Sigmoid colon (tissue), 7 donors: ENCODE measurements at regions of chr9 and their contacts with region 1.

Region 1: GRCh38 chr9:137605121-137606004 is at the start of gene ARRDC1:
- DNase-seq: peak; percentile 97
- H3K4me3 ChIP-seq: peak within 1 kb of the TSS; percentile 54 to 99 (median 84)
- H3K27ac ChIP-seq: peak within 1 kb of the TSS; percentile 79 to 85 (median 84)
- H3K4me1 ChIP-seq: peaks cover 0 to 32% (median 25%) of the 10 kb centered on the region in 4 donors
- H3K27me3 ChIP-seq: no peaks in the 10 kb centered on the region
- CTCF ChIP-seq: no peak
- EP300 ChIP-seq: no peak
- POLR2A ChIP-seq: no peak
- total RNA-seq, gene ARRDC1: 12.5 to 26.3 (median 19.7) TPM

Region 2: DNA sequence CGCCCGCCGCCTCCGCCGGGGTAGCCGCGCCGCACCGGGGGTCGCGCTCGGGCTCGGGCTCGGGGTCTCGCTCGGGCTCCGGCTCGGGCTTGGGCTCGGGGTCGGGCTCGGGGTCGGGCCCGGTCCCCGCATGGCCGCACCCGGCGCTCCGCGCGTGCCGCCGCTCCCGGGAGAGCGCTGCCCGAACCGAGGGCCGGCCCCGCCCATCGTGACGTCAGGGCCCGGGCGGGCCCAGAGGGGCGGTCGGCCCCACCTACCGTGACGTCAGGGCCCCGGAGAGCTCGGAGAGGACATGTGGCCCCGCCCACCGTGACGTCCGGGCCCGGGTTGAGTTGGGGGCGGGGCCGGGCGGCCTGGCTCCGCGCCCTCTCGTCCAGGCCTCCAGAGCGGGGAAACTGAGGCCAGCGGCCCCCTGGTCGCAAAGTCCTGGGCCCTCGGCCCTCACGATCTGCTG is 146.2 kb before region 1 on chr9 and contains the start of gene NSMF:
- intact Hi-C with region 1: loop called (anchors 10 kb)
- DNase-seq: peak; percentile 98
- H3K4me3 ChIP-seq: peak within 1 kb of the TSS; percentile 48 to 79 (median 68)
- H3K27ac ChIP-seq: peak within 1 kb of the TSS; percentile 59 to 80 (median 74)
- H3K4me1 ChIP-seq: peaks cover 0 to 45% (median 35%) of the 10 kb centered on the region in 4 donors
- H3K27me3 ChIP-seq: no peaks in the 10 kb centered on the region
- CTCF ChIP-seq: no peak
- EP300 ChIP-seq: no peak
- POLR2A ChIP-seq: no peak
- total RNA-seq, gene NSMF: 21.8 to 33.8 (median 27.4) TPM

Region 3: DNA sequence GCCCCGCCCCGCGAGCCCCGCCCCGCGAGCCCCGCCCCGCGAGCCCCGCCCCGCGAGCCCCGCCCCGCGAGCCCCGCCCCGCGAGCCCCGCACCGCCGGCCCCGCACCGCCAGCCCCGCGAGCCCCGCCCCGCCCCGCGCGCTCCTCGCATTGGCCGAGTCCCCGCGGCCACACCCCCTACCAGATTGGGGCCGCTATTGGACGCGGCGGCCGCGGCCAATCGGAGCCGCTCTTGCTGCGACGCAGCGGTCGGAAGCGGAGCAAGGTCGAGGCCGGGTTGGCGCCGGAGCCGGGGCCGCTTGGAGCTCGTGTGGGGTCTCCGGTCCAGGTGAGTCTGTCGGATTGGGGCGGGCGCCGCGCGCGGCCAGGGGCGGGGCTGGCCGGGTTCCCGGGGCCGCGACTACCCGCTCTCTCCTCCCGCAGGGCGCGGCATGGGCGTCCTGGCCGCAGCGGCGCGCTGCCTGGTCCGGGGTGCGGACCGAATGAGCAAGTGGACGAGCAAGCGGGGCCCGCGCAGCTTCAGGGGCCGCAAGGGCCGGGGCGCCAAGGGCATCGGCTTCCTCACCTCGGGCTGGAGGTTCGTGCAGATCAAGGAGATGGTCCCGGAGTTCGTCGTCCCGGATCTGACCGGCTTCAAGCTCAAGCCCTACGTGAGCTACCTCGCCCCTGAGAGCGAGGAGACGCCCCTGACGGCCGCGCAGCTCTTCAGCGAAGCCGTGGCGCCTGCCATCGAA is 53.5 kb before region 1 on chr9 and contains the start of gene MRPL41:
- intact Hi-C with region 1: loop called (anchors 5 kb)
- DNase-seq: peak; percentile 95
- H3K4me3 ChIP-seq: peak within 1 kb of the TSS; percentile 56 to 95 (median 86)
- H3K27ac ChIP-seq: peak within 1 kb of the TSS; percentile 86 to 94 (median 92)
- H3K4me1 ChIP-seq: peaks cover 0 to 42% (median 33%) of the 10 kb centered on the region in 4 donors
- H3K27me3 ChIP-seq: no peaks in the 10 kb centered on the region
- CTCF ChIP-seq: no peak
- EP300 ChIP-seq: no peak
- POLR2A ChIP-seq: peak; percentile 65 to 70
- total RNA-seq, gene MRPL41: 38.5 to 73.1 (median 57.9) TPM

Region 4: DNA sequence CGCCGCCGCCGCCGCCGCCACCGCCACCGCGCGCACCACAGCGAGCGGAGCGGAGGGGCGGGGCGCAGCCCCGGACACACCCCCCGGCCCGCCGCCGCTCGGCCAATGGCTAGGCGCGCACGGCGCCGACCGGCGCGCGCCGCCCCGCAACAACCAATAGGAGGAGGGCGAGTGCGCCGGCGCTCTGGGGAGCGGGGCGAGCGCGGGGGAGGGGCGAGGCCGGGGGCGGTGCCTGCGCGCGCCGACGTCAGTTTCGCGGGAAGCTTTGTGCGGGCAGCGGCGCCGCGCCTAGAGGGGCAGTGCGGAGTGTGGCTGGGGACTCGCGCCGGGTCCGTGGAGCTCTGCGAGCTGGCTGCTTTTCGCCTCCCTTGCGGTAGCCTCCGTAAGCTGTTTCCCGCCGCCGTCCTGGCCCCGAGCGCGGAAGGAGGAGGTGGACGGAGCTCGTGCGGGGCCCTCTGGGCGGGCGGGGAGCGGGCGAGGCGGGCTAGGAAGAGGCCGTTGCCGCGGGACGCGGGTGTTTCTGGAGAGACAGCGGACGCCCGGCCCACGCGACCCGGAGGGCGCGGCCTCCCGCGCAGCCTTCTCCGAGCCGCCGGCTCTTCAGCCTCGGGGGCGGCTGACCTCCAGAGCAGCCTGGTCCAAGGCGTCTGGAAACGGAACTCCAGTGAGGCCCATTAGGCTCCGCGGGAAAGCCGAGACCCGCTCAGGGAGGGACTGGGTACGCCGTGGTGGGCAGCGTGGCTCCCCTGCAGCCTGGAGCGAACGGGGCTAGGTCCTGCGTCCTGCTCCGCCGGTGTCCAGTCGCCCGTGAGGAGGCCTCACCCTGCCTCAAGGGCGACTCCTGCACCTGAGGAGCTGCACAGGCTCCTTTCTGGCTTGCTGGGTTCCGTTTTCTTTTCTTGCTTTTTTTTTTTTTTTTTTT is 14.6 kb before region 1 on chr9 and contains the start of gene ZMYND19:
- intact Hi-C with region 1: loop called (anchors 1 kb)
- DNase-seq: peak; percentile 94
- H3K4me3 ChIP-seq: peak within 1 kb of the TSS; percentile 64 to 84 (median 76)
- H3K27ac ChIP-seq: peak within 1 kb of the TSS; percentile 53 to 80 (median 77)
- H3K4me1 ChIP-seq: peaks cover 0 to 27% (median 22%) of the 10 kb centered on the region in 4 donors
- H3K27me3 ChIP-seq: no peaks in the 10 kb centered on the region
- CTCF ChIP-seq: no peak
- EP300 ChIP-seq: no peak
- POLR2A ChIP-seq: no peak
- total RNA-seq, gene ZMYND19: 7.2 to 13.0 (median 10.0) TPM

Region 5: GRCh38 chr9:137618105-137619067 is 13.0 kb after region 1 on chr9 and contains the start of gene EHMT1:
- intact Hi-C with region 1: loop called (anchors 2 kb)
- DNase-seq: peak; percentile 90
- H3K4me3 ChIP-seq: peak within 1 kb of the TSS; percentile 83 to 94 (median 86)
- H3K27ac ChIP-seq: peak within 1 kb of the TSS; percentile 91 to 95 (median 92)
- H3K4me1 ChIP-seq: peaks cover 0 to 48% (median 44%) of the 10 kb centered on the region in 4 donors
- H3K27me3 ChIP-seq: no peaks in the 10 kb centered on the region
- CTCF ChIP-seq: no peak
- EP300 ChIP-seq: no peak
- POLR2A ChIP-seq: peak in 1 of 2 donors; percentile 50
- total RNA-seq, gene EHMT1: 60.4 to 91.4 (median 70.7) TPM

Region 6: DNA sequence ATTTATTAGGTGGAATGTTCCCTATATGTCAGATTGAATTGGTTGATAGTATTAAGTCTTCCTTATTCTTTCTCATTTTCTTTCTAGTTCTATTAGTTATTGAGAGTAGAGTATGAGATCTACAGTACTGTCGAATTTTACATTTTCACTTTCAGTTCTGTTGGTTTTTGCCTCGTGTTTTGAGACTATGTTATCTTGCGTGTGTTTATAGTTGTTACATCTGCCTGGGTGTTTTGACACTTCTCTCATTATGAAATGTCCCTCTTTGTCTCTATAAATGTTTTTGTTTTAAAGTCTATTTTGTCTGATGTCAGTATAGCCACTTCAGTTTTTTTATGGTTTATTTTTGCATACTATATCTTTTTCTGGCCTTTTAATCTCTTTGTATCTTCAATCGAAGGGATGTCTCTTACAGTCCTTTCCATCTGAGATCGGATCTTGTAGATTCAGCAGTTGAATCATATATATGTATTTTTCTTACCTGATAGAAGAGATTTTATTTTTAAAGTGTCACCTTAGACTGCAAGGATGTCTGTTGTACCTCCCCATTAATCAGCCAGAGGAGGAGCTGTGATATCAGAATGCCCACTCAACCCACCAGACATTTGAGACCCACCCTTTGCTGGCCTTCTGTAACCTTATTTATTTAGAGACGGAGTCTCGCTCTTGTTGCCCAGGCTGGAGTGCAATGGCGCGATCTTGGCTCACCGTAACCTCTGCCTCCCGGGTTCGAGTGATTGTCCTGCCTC is 34.1 kb after region 1 on chr9:
- intact Hi-C with region 1: no loop called
- DNase-seq: no peak
- H3K4me3 ChIP-seq: peak overlapping the region in 1 of 4 donors; percentile 1
- H3K27ac ChIP-seq: peak overlapping the region in 1 of 4 donors; percentile 25
- H3K4me1 ChIP-seq: peaks cover 0 to 17% (median 10%) of the 10 kb centered on the region in 4 donors
- H3K27me3 ChIP-seq: no peaks in the 10 kb centered on the region
- CTCF ChIP-seq: no peak
- EP300 ChIP-seq: no peak
- POLR2A ChIP-seq: no peak